Activated T-helper 2 cell treated with anti-CD3 and anti-CD28 coated beads, Interferon-gamma antibody, Interleukin-2, Interleukin-4, amounts not matched to agents 10 μg/mL and 5 μg/mL and 100 μg/mL, durations not matched to agents 14 hours and 24 hours and 36 hours (primary cell): ENCODE measurements at regions of chr9 and their contacts with region 1.

Region 1: DNA sequence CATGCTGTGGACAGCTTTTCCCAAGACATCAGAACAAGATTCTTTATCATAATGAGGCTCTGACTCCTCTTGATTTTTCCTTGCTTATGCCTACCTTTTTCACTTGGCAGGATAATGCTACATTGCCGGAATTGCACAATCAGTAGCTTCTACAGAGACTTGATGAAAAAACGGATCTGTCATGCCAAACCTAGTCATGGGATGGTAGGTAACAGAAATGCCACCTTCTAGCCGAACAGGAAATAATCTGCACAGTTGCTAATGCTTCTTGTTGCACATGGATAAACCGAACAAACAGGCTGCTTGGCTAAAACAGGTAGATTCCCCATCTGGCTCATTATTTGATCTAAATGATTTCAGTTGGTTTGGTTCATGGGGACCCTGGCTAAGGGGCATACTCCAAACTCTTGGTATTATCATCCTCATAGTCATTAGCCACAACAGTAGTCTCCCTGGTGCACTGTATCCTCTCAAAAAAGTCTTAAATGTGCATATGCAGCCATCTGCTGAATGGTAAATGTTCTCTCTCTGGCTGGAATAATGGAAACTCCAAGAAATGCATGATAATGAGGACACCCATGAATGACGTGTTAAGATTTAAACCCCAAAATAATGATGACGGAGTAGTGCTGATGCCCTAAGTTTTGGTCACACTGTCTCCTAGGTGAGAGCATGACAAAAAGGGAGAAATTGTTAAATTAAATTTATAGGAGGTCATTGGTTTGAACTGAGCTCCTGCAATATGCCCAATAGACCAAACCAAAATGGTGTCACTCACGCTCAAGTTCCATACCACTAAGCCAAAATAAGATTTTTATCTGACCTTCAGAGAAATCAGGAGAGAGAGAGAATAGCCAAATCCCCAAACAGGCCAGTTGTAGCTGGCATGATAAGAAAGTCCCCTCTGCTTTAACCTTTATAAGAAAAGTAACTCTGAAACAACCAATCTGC is 47.0 kb downstream of the RAPGEF1 start:
- DNase-seq: no peak
- H3K4me3 Mint-ChIP-seq: no peak overlapping the region
- H3K27ac Mint-ChIP-seq: peak overlapping the region; percentile 25
- H3K4me1 Mint-ChIP-seq: peaks cover 81% of the 10 kb centered on the region
- H3K27me3 Mint-ChIP-seq: no peaks in the 10 kb centered on the region

Region 2: DNA sequence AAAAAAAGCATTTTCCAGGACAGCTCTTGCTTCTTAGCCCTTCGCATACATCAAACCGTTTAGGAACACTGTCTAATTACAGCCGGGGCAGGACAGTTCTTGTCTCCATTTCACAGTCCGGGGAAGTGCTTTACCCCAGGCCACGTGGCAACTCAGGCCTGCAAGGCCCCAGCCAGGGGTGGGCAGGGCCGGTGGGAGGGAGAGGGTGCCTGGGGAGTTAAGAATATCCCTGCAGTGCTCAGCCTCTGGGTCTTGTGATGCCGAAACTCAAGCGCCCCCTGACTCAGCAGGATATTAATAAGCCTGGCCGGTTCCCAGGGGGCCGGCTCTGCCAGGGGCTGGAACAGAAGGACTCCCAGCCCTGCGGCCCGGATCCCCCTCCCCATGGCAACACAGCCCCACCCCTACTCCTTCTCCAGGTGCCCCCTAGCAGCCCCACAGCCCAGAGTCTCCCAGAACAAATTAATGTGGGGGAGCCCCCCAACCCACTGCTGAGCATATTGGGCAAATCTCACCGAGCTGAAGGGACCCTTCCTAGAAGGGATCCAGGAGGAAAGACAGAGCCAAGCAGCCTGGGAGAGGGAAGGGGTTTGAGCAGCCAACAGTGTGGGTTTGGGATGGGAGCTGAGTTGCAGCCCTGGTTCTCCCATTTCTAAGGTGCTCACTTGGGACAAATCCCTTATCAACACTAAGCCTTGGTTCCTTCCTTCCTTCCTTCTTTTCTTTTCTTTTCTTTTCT is 358.1 kb before region 1 on chr9:
- intact Hi-C with region 1: no loop called
- DNase-seq: no peak
- H3K4me3 Mint-ChIP-seq: no peak overlapping the region
- H3K27ac Mint-ChIP-seq: no peak overlapping the region
- H3K4me1 Mint-ChIP-seq: no peaks in the 10 kb centered on the region
- H3K27me3 Mint-ChIP-seq: peaks cover 5% of the 10 kb centered on the region

Region 3: GRCh38 chr9:131650254-131650653 is 42.6 kb before region 1 on chr9:
- intact Hi-C with region 1: loop called (anchors 1 kb)
- DNase-seq: no peak
- H3K4me3 Mint-ChIP-seq: no peak overlapping the region
- H3K27ac Mint-ChIP-seq: peak overlapping the region; percentile 33
- H3K4me1 Mint-ChIP-seq: peaks cover 47% of the 10 kb centered on the region
- H3K27me3 Mint-ChIP-seq: no peaks in the 10 kb centered on the region

Region 4: DNA sequence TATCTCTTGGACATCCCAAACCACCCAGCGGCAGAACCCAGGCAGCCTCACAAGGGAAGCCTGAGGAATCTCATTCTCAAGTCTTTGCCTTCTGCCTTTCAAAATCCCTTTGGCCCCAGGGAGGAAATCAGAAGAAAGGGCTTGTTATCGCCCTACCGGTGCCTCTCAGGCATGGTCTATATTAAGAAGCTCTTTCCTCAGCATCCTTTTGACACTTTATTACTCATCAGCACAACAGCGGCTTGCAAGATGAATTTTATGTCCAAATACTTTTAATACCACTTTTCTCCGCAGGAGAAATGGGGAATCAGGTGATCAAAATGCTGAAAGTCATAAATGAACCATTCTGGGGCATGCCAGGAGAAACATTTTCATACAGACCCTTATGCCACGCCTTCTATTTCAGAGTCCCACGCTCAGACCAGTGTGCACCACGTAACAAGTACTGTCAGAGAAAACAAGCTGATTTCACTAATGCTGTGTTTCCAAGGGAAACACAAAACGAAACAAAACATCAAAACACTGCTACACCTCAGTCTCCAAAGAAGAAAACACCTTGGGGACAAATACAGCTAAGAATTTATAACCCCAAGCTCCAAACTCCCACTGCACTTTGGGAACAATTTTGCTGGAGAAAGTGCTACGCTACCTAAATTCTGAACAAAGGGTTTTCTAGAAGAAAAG is 17.0 kb after region 1 on chr9:
- intact Hi-C with region 1: loop called (anchors 1 kb)
- DNase-seq: peak; percentile 19
- H3K4me3 Mint-ChIP-seq: peak overlapping the region; percentile 18
- H3K27ac Mint-ChIP-seq: peak overlapping the region; percentile 92
- H3K4me1 Mint-ChIP-seq: peaks cover 63% of the 10 kb centered on the region
- H3K27me3 Mint-ChIP-seq: no peaks in the 10 kb centered on the region

Region 5: GRCh38 chr9:131815971-131816873 is 123.3 kb after region 1 on chr9:
- intact Hi-C with region 1: no loop called
- DNase-seq: no peak
- H3K4me3 Mint-ChIP-seq: no peak overlapping the region
- H3K27ac Mint-ChIP-seq: no peak overlapping the region
- H3K4me1 Mint-ChIP-seq: no peaks in the 10 kb centered on the region
- H3K27me3 Mint-ChIP-seq: peaks cover 29% of the 10 kb centered on the region